ENCODE measurements at regions of chr11 and their contacts with region 1.

Region 1: DNA sequence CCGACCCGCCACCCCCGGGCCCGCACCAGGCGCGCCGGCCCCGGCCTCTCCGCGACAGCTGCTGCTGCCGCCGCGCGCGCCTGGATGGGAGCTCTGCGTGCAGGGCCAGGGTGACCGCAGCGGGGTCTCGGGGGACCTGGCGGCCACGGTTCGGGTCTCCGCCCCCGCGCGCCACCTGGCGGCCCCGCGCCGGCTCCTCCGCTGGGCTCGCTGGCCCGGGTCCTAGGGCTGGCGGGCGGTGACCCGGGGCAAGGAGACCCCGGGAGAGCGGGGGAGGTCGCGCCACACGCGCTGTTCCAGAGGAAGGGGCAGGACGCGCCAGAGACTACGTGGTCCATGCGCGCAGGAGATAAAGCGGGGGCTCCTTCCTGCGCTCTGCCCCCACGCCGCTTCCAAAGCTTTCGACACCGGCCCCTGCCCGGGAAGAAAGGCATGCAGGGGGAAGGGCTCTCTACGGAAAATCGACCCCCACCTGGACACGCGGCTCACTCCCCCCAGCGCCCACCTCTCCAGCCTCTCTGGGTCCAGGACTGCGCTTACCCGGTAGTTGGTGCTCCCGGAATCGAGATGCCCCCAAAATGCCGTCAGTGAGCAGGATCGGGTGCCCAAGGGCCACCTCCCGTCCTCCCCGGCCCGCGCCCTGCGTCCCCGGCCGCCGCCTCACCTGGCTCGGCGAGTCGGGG is 475 bp downstream of the SHANK2 start:
- DNase-seq: peak; percentile 72
- ATAC-seq: peak; percentile 25
- H3K4me3 Mint-ChIP-seq: peak overlapping the region; percentile 73
- H3K27ac Mint-ChIP-seq: no peak overlapping the region
- H3K4me1 Mint-ChIP-seq: peaks cover 73% of the 10 kb centered on the region
- H3K27me3 Mint-ChIP-seq: no peaks in the 10 kb centered on the region; the same call in 1 of the 2 replicates
- CTCF ChIP-seq: peak; percentile 47; the same call in 1 of the 2 replicates

Region 2: GRCh38 chr11:71183157-71183677 is 68.7 kb before region 1 on chr11:
- CTCF ChIA-PET with region 1: interaction called, 10 read pairs
- POLR2A ChIA-PET with region 1: no interaction called
- DNase-seq: no peak
- ATAC-seq: peak; percentile 24; the same call in 1 of the 2 replicates
- H3K4me3 Mint-ChIP-seq: no peak overlapping the region
- H3K27ac Mint-ChIP-seq: no peak overlapping the region
- H3K4me1 Mint-ChIP-seq: peaks cover 46% of the 10 kb centered on the region
- H3K27me3 Mint-ChIP-seq: no peaks in the 10 kb centered on the region
- CTCF ChIP-seq: no peak

Region 3: GRCh38 chr11:71266221-71266833 is 14.4 kb after region 1 on chr11:
- CTCF ChIA-PET with region 1: interaction called, 11 read pairs
- POLR2A ChIA-PET with region 1: interaction called, 3 read pairs
- DNase-seq: peak; percentile 77
- ATAC-seq: peak; percentile 98
- H3K4me3 Mint-ChIP-seq: peak overlapping the region; percentile 33
- H3K27ac Mint-ChIP-seq: no peak overlapping the region
- H3K4me1 Mint-ChIP-seq: peaks cover 13% of the 10 kb centered on the region
- H3K27me3 Mint-ChIP-seq: peaks cover 10% of the 10 kb centered on the region
- CTCF ChIP-seq: no peak

Region 4: DNA sequence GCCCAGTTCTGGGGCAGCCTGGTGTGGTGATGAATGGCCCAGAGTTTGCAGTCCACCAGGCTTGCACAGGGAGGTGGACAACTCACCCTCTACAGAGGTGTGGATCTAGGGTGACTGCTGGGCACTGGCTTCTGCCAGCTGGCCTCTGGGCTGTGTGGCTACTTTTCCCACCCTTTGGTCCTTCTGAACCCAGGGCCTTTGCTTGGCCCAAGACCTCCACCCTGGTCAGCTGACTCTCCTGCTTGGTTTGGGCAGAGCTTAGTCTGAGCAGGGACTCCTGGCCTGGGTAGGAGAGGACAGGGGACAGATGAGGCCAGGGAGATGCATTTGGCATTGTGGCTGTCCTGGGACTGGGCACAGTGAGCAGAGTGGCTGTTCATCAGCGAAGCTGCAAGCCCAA is 83.5 kb after region 1 on chr11:
- CTCF ChIA-PET with region 1: no interaction called
- POLR2A ChIA-PET with region 1: no interaction called
- DNase-seq: no peak
- ATAC-seq: no peak
- H3K4me3 Mint-ChIP-seq: no peak overlapping the region
- H3K27ac Mint-ChIP-seq: no peak overlapping the region
- H3K4me1 Mint-ChIP-seq: peaks cover 12% of the 10 kb centered on the region
- H3K27me3 Mint-ChIP-seq: peaks cover 32% of the 10 kb centered on the region
- CTCF ChIP-seq: no peak

Region 5: GRCh38 chr11:71372693-71373657 is 121.1 kb after region 1 on chr11:
- CTCF ChIA-PET with region 1: interaction called, 13 read pairs
- POLR2A ChIA-PET with region 1: no interaction called
- DNase-seq: no peak
- ATAC-seq: peak; percentile 57
- H3K4me3 Mint-ChIP-seq: no peak overlapping the region
- H3K27ac Mint-ChIP-seq: 0 out of 2 replicates have a peak overlapping the region, but pooled peaks have one; percentile 42
- H3K4me1 Mint-ChIP-seq: peaks cover 23% of the 10 kb centered on the region
- H3K27me3 Mint-ChIP-seq: peaks cover 33% of the 10 kb centered on the region
- CTCF ChIP-seq: no peak